ENCODE measurements at regions of chr20 and their contacts with region 1.

Region 1: DNA sequence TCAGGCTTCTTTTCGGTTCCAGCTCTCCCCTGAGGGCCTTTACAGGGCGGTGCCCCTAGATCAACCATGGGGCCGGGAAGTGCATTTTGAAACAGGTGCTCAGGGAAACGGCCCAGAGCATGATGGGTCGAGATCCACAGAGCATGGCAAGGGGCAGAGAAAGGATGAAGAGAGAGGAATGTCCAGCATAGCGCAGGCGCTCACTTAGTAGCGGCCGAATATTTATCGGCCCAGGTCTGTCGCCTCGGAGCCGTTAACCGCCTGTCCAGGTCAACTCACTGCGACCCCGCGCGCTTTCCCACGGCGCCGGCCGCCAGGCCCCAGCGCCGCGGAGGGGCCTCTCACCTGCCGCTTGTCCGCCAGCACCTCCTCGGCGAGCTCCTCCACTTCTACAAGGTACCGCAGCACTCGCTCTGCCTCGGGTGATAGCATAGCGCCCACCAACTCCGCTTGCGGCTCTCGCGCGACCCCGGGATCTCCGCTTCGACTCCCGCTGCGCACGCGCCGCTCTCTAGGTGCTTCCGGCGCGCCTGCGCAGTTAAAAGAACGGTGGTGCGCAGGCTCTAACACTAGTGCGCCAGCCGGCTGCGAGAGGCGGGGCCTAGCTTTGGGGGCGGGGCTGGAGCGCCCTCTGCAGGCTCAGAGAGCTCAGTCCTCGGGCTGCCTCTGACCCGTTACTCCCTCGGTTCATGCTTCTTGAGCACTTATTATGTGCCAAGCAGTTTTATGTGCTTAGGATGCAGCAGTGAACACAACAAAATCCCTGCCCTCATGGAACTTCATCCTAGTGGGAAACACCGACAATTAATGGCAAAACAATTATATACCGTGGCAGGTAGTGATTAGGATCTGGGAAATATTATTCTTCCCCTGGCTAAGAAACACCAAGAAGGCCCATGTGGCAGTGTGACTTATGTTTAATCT is at the start of gene PDRG1:
- DNase-seq: peak; percentile 98
- ATAC-seq: peak; percentile 98
- H3K4me3 Mint-ChIP-seq: peak within 1 kb of the TSS; percentile 98
- H3K27ac Mint-ChIP-seq: peak within 1 kb of the TSS; percentile 92
- H3K4me1 Mint-ChIP-seq: peaks cover 8% of the 10 kb centered on the region
- H3K27me3 Mint-ChIP-seq: peaks cover 15% of the 10 kb centered on the region
- CTCF ChIP-seq: peak; percentile 77
- total RNA-seq, gene PDRG1: 16.0 to 17.6 TPM (median 17.2 TPM) in 3 replicates

Region 2: DNA sequence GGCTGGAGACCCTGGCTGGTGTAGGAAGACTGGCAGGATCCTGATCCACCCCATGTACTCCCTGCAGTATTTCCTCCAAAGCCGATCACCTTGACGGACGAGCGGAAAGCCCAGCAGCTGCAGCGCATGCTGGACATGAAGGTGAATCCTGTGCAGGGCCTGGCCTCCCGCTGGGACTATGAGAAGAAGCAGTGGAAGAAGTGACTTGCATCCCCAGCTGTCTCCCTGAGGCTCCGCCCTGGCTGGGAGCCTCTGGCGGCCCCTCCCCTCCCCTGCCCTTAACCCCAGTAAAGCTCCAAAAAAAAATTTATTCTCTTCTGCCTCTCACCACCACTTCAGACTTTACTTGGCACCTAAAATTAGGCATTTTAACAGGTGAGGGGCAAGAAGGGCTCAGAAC is 307.1 kb before region 1 on chr20:
- CTCF ChIA-PET with region 1: no interaction called
- POLR2A ChIA-PET with region 1: no interaction called
- DNase-seq: no peak
- ATAC-seq: no peak
- H3K4me3 Mint-ChIP-seq: no peak overlapping the region
- H3K27ac Mint-ChIP-seq: no peak overlapping the region
- H3K4me1 Mint-ChIP-seq: no peaks in the 10 kb centered on the region
- H3K27me3 Mint-ChIP-seq: no peaks in the 10 kb centered on the region; the same call in 1 of the 2 replicates
- CTCF ChIP-seq: no peak

Region 3: DNA sequence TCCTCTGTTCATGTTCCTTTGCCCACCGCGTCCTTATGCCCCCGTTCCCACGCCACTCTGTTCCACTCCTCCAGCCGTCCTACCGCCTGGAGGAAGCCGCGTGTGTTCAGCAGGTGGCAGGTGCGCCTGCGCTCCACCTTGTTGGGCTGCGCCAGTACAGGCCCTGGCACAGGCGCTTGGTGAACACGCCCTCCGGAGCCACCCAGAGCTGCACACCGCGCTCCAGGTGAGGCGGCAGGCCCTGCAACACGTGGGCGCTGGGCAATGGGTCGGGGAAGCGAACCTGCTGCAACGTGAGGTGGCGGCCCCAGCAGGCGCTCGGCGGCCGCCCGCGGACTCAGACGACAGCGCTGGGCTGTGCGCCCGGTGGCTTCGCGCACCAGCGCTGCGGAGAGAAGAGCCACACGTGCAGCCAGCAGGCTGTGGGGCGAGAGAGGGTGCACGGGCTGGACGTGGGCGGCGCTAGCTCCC is 102.3 kb before region 1 on chr20:
- CTCF ChIA-PET with region 1: interaction called, 96 read pairs
- POLR2A ChIA-PET with region 1: interaction called, 3 read pairs
- DNase-seq: no peak
- ATAC-seq: no peak; the same call in 1 of the 2 replicates
- H3K4me3 Mint-ChIP-seq: no peak overlapping the region
- H3K27ac Mint-ChIP-seq: no peak overlapping the region
- H3K4me1 Mint-ChIP-seq: 0 out of 2 replicates have a peak, but pooled peaks cover 4% of the 10 kb centered on the region
- H3K27me3 Mint-ChIP-seq: peaks cover 40% of the 10 kb centered on the region
- CTCF ChIP-seq: no peak

Region 4: GRCh38 chr20:31879143-31879987 is 72.4 kb before region 1 on chr20:
- CTCF ChIA-PET with region 1: interaction called, 15 read pairs
- POLR2A ChIA-PET with region 1: no interaction called
- DNase-seq: peak; percentile 96
- ATAC-seq: peak; percentile 99
- H3K4me3 Mint-ChIP-seq: peak overlapping the region; percentile 92
- H3K27ac Mint-ChIP-seq: peak overlapping the region; percentile 76; the same call in 1 of the 2 replicates
- H3K4me1 Mint-ChIP-seq: no peaks in the 10 kb centered on the region
- H3K27me3 Mint-ChIP-seq: peaks cover 25% of the 10 kb centered on the region
- CTCF ChIP-seq: no peak

Region 5: DNA sequence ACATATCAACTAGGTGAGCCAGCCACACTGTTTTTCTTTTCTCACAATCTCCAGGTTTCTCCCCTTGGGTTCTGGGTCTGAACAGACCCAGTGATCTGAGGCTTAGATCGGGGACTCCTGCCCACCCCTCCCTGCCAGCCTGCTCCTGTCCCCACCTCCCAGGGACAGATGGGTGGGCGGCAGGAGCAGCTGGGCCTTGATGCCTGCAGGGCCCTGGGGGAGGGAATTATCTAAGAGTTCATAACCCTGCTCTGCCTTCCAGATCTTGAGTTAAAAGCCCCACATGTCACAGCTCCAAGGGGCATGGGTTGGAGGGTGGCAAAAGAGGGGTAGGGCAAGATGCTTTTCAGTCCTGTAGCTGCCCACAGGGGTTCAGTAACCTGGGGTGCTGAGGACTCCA is 11.0 kb after region 1 on chr20:
- CTCF ChIA-PET with region 1: interaction called, 18 read pairs
- POLR2A ChIA-PET with region 1: interaction called, 4 read pairs
- DNase-seq: no peak
- ATAC-seq: no peak
- H3K4me3 Mint-ChIP-seq: no peak overlapping the region
- H3K27ac Mint-ChIP-seq: no peak overlapping the region
- H3K4me1 Mint-ChIP-seq: peaks cover 13% of the 10 kb centered on the region
- H3K27me3 Mint-ChIP-seq: peaks cover 46% of the 10 kb centered on the region
- CTCF ChIP-seq: no peak

Region 6: GRCh38 chr20:32007787-32008616 is 56.2 kb after region 1 on chr20:
- CTCF ChIA-PET with region 1: interaction called, 11 read pairs
- POLR2A ChIA-PET with region 1: no interaction called
- DNase-seq: peak; percentile 50
- ATAC-seq: peak; percentile 84
- H3K4me3 Mint-ChIP-seq: peak overlapping the region; percentile 3; the same call in 1 of the 2 replicates
- H3K27ac Mint-ChIP-seq: peak overlapping the region; percentile 79
- H3K4me1 Mint-ChIP-seq: peaks cover 53% of the 10 kb centered on the region
- H3K27me3 Mint-ChIP-seq: no peaks in the 10 kb centered on the region; the same call in 1 of the 2 replicates
- CTCF ChIP-seq: no peak

Region 7: DNA sequence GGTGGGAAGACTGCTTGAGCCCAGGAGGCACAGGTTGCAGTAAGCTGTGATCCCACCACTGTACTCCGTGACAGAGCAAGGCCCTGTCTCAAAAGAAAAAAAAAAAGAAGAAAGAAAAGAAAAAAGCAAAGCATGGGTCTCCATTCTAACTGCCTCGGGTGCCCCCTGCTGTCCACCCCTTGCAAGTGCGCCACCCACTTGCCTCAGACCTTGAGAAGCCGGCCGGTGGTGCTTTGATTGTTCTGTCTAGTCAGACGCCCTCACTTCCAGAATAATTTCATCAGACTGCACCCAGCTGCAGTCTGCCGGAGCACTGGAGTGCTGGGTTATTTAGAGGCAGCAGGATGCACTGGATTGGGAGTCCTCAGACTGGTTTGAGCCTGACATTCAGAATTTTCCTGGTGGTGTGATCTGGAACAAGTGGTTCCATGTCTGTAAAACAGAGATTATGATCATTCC is 140.1 kb after region 1 on chr20:
- CTCF ChIA-PET with region 1: interaction called, 12 read pairs
- POLR2A ChIA-PET with region 1: no interaction called
- DNase-seq: peak; percentile 91
- ATAC-seq: peak; percentile 62
- H3K4me3 Mint-ChIP-seq: no peak overlapping the region
- H3K27ac Mint-ChIP-seq: no peak overlapping the region
- H3K4me1 Mint-ChIP-seq: peaks cover 33% of the 10 kb centered on the region
- H3K27me3 Mint-ChIP-seq: peaks cover 6% of the 10 kb centered on the region; the same call in 1 of the 2 replicates
- CTCF ChIP-seq: peak; percentile 82

Region 8: GRCh38 chr20:32116079-32116521 is 164.3 kb after region 1 on chr20:
- CTCF ChIA-PET with region 1: no interaction called
- POLR2A ChIA-PET with region 1: no interaction called
- DNase-seq: no peak
- ATAC-seq: no peak
- H3K4me3 Mint-ChIP-seq: no peak overlapping the region
- H3K27ac Mint-ChIP-seq: peak overlapping the region; percentile 74
- H3K4me1 Mint-ChIP-seq: peaks cover 15% of the 10 kb centered on the region
- H3K27me3 Mint-ChIP-seq: no peaks in the 10 kb centered on the region
- CTCF ChIP-seq: no peak